Activated B cell treated with CpG ODN at 0.5 μM for 24 hours (primary cell): ENCODE measurements at regions of chr5 and their contacts with region 1.

Region 1: DNA sequence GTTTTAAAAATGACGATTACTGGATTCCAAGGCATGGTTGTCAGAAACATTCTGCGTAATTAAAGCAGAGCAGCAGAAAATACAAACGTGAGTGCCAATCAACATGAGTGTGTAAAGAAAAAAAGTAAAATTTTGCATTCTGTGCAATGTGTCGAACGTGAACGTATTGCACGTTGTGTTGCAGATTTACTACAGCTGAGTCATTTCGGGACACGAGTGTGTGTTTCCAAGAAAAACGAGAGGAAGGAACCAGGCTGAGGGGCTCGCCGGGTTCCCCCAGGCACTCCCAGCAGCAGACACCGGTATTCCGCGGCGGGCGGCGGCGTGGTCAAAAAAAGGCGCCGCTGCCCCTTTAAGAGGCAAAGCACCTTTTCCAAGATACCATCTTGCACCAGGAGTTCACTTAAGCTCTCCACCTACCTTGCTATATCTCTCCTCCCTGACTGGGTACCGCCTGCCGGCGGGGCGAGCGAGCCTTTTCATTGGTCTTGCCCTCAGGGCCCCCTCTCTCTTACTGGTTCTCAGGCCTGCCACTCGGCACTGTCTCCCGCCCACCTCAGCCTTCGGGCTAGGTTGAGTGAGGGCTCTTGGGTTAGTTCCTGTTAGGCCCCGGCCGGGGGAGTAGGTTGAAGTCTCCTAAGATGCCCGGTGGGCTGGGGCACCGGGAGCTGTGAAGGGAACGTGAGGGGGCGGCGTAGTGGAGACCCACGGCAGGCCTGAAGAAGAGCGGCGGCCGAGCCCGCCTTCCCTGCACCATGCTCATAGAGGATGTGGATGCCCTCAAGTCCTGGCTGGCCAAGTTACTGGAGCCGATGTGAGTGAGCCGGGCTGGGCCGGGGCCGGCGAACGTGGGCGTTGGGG is at the start of gene RBM27:
- DNase-seq: peak; percentile 98
- ATAC-seq: peak; percentile 100
- H3K4me3 Mint-ChIP-seq: no peak within 1 kb of the TSS
- H3K27ac Mint-ChIP-seq: no peak within 1 kb of the TSS
- H3K4me1 Mint-ChIP-seq: peaks cover 16% of the 10 kb centered on the region
- H3K27me3 Mint-ChIP-seq: no peaks in the 10 kb centered on the region
- CTCF ChIP-seq: no peak
- total RNA-seq, gene RBM27: 24.4 and 28.5 TPM in 2 replicates

Region 2: DNA sequence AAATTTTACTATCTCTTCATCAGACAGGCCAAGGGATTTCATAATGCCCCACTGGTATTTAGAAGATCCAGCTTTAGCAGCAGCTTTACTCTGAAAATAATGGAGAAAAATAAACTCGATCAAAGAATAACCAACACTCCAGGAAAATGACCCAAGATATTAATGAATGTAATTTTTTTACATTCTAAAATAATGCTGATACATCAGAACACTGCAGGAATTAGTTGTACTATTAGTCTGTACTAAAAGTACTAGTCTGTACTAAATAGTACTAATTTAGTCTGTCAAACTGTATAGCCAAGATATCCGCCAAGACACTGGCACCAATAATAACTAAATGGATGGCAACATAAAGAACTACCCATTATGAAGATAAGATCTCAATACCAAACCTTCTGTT is 38.9 kb before region 1 on chr5:
- CTCF ChIA-PET with region 1: no interaction called
- POLR2A ChIA-PET with region 1: no interaction called
- intact Hi-C with region 1: no loop called
- DNase-seq: no peak
- ATAC-seq: no peak
- H3K4me3 Mint-ChIP-seq: no peak overlapping the region
- H3K27ac Mint-ChIP-seq: no peak overlapping the region
- H3K4me1 Mint-ChIP-seq: no peaks in the 10 kb centered on the region
- H3K27me3 Mint-ChIP-seq: no peaks in the 10 kb centered on the region
- CTCF ChIP-seq: no peak

Region 3: GRCh38 chr5:146188358-146188757 is 14.9 kb before region 1 on chr5:
- CTCF ChIA-PET with region 1: interaction called, 3 read pairs
- POLR2A ChIA-PET with region 1: interaction called, 28 read pairs
- intact Hi-C with region 1: no loop called
- DNase-seq: no peak
- ATAC-seq: no peak
- H3K4me3 Mint-ChIP-seq: no peak overlapping the region
- H3K27ac Mint-ChIP-seq: no peak overlapping the region
- H3K4me1 Mint-ChIP-seq: no peaks in the 10 kb centered on the region
- H3K27me3 Mint-ChIP-seq: peaks cover 14% of the 10 kb centered on the region
- CTCF ChIP-seq: no peak

Region 4: DNA sequence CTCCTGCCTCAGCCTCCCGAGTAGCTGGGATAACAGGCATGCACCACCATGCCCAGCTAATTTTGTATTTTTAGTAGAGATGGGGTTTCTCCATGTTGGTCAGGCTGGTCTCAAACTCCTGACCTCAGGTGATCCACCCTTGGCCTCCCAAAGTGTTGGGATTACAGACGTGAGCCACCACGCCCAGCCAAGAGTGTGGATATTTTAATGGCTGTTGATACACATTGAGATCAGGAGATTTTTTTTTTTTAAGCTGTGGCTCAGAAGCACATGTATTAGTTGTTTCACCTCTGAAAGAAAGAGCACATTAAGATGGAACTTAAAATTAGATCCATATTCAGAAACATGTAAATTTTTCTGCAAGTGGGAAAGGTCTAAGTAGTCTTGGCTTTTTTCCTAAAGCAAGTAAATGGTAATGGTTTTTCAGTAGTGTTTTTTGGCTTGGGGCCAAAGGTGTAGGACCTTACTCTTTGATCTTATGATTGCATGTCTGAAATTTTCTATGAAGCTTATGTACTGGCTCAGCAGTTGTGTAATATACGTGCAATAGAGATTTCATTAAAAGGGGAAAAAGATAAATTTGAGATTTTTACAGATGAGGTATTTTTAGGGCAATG is 10.1 kb after region 1 on chr5:
- CTCF ChIA-PET with region 1: no interaction called
- POLR2A ChIA-PET with region 1: interaction called, 4 read pairs
- intact Hi-C with region 1: loop called (anchors 1 kb)
- DNase-seq: no peak
- ATAC-seq: no peak
- H3K4me3 Mint-ChIP-seq: no peak overlapping the region
- H3K27ac Mint-ChIP-seq: no peak overlapping the region
- H3K4me1 Mint-ChIP-seq: peaks cover 56% of the 10 kb centered on the region
- H3K27me3 Mint-ChIP-seq: no peaks in the 10 kb centered on the region
- CTCF ChIP-seq: no peak

Region 5: DNA sequence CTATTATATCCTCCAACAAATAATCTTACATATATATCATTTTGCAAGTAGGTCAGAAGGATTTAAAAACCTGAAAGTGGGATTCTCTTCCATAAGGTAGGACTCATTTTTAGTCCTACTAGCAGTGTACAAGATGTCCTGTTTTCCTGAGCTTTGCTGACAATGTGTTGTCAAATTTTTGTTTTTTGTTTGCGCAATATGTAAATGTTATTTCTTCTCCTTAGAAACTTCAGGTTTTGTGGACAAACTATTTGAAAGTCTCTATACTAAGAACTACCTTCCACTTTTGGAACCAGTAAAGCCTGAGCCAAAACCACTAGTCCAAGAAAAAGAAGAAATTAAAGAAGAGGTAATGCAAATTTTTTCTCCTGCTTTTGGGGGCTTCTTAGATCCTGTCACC is 19.9 kb after region 1 on chr5:
- CTCF ChIA-PET with region 1: no interaction called
- POLR2A ChIA-PET with region 1: no interaction called
- intact Hi-C with region 1: loop called (anchors 2 kb)
- DNase-seq: no peak
- ATAC-seq: no peak
- H3K4me3 Mint-ChIP-seq: no peak overlapping the region
- H3K27ac Mint-ChIP-seq: no peak overlapping the region
- H3K4me1 Mint-ChIP-seq: peaks cover 6% of the 10 kb centered on the region
- H3K27me3 Mint-ChIP-seq: no peaks in the 10 kb centered on the region
- CTCF ChIP-seq: no peak

Region 6: DNA sequence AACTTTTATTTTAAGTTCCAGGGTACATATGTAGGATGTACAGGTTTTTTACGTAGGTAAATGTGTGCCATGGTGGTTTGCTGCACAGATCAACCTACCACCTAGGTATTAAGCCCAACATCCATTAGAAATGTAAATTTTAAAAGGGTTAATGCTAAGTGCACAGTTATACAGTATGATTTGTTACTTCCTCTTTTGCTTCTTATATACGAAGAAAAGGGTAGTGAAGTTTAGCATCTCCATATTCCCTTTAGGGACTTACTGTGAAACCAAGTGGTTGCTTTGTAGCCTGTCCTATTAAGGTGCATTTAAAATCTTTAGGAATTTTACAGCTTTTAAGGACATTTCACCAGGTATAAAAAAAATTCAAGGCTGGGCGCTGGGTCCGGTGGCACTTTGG is 46.6 kb after region 1 on chr5:
- CTCF ChIA-PET with region 1: no interaction called
- POLR2A ChIA-PET with region 1: no interaction called
- intact Hi-C with region 1: loop called (anchors 10 kb)
- DNase-seq: no peak
- ATAC-seq: peak; percentile 98
- H3K4me3 Mint-ChIP-seq: no peak overlapping the region
- H3K27ac Mint-ChIP-seq: peak overlapping the region; percentile 56
- H3K4me1 Mint-ChIP-seq: peaks cover 12% of the 10 kb centered on the region
- H3K27me3 Mint-ChIP-seq: no peaks in the 10 kb centered on the region
- CTCF ChIP-seq: no peak

Region 7: GRCh38 chr5:146446853-146447733 is 243.9 kb after region 1 on chr5 and contains the start of gene TCERG1:
- CTCF ChIA-PET with region 1: no interaction called
- POLR2A ChIA-PET with region 1: no interaction called
- intact Hi-C with region 1: loop called (anchors 1 kb)
- DNase-seq: peak; percentile 89
- ATAC-seq: peak; percentile 89
- H3K4me3 Mint-ChIP-seq: peak within 1 kb of the TSS; percentile 99
- H3K27ac Mint-ChIP-seq: peak within 1 kb of the TSS; percentile 99
- H3K4me1 Mint-ChIP-seq: peaks cover 47% of the 10 kb centered on the region
- H3K27me3 Mint-ChIP-seq: no peaks in the 10 kb centered on the region
- CTCF ChIP-seq: peak; percentile 33
- total RNA-seq, gene TCERG1: 107 and 114 TPM in 2 replicates